Activated CD4-positive, alpha-beta T cell treated with anti-CD3 and anti-CD28 coated beads, Interleukin-2, amount 10 ng/mL, durations not matched to agents 24 days and 14 days (primary cell): ENCODE measurements at regions of chr5 and their contacts with region 1.

Region 1: GRCh38 chr5:142095651-142096330 is 12.8 kb upstream of the NDFIP1 start:
- DNase-seq: peak; percentile 89
- H3K4me3 Mint-ChIP-seq: peak overlapping the region; percentile 53
- H3K27ac Mint-ChIP-seq: peak overlapping the region; percentile 93
- H3K4me1 Mint-ChIP-seq: peaks cover 46% of the 10 kb centered on the region
- H3K27me3 Mint-ChIP-seq: no peaks in the 10 kb centered on the region

Region 2: GRCh38 chr5:142082182-142082781 is 13.5 kb before region 1 on chr5:
- intact Hi-C with region 1: loop called (anchors 1 kb)
- DNase-seq: no peak
- H3K4me3 Mint-ChIP-seq: no peak overlapping the region
- H3K27ac Mint-ChIP-seq: peak overlapping the region; percentile 41
- H3K4me1 Mint-ChIP-seq: peaks cover 15% of the 10 kb centered on the region
- H3K27me3 Mint-ChIP-seq: no peaks in the 10 kb centered on the region

Region 3: DNA sequence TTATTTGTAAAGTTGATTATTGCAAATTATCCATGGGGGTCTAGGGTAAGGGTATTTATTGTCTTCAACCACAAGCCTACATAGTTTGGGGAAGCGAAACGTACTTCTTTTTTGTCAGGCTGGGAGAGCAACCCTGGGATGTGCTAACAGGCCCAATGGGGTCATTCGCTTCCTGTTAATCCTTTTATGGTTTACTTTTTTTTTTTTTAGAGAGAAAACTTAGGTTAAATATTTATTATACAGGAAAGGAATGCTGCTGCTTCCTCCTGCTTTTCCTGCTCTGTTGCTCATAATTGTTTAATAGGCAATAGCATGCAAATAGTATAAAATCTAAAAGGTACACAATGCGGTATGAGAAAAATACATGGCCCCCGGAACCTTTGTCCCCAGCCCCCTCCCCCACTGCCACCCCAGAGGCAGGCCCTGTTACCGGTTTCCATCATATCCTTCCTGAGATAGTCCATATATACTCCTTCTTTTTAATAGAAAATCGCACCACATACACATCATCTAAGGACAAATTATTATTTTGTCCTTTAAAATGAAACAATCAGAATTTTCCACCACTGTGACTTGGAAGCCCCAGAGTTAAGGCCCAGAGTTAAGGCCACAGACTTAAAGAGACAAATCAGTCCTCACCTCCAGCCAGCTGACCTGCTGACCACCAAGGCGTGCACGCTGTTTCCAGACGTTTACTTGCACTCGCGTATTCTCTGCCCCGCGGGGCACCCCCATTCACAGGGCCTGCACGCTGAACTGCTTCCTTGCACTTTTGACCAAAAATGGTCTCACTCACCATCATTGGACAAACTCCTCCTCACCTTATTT is 96.7 kb after region 1 on chr5:
- intact Hi-C with region 1: no loop called
- DNase-seq: no peak
- H3K4me3 Mint-ChIP-seq: no peak overlapping the region
- H3K27ac Mint-ChIP-seq: no peak overlapping the region
- H3K4me1 Mint-ChIP-seq: peaks cover 2% of the 10 kb centered on the region
- H3K27me3 Mint-ChIP-seq: peaks cover 3% of the 10 kb centered on the region

Region 4: DNA sequence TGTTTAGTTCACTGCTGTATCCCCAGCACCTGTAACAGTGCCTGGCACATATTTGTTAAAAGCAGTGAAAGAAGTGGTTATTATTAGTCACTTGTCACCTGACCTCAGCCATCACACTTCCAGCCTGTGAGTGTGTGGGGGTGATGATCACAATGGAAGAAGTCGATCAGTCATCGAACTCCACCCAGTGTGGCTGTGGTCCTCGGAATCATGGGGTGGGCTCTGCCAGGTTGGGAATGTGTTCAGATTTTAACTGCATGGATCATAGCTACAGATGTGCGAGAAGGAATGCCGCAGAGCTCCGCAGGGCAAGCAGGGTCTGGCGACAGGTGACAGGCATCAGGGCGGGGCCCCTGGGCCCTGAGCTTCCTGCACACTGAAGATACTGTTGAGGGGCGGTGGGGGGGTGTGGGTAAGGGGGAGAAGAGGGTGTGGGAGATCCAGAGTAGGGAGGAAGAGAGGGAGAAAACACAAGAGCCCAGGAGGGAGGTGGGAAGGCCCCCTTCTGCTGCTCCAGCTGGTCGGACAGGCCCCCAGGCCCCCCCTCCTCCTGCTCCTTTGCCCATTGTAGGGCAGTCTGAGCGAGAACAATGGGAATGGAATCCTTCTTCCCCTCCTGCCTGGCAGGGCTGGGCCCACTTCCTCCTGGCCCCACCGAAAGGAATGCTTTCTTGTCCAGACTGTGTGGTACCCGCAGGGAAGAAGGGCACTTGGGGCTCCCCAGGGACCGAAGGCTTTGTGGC is 139.4 kb after region 1 on chr5:
- intact Hi-C with region 1: no loop called
- DNase-seq: no peak
- H3K4me3 Mint-ChIP-seq: no peak overlapping the region
- H3K27ac Mint-ChIP-seq: peak overlapping the region; percentile 31
- H3K4me1 Mint-ChIP-seq: peaks cover 8% of the 10 kb centered on the region
- H3K27me3 Mint-ChIP-seq: peaks cover 9% of the 10 kb centered on the region